ENCODE measurements at regions of chr12 and their contacts with region 1.

Region 1: GRCh38 chr12:12916135-12916944 is 25.0 kb downstream of the GPRC5A start:
- DNase-seq: peak; percentile 79 to 93 (median 91)
- ATAC-seq: peak; percentile 89
- H3K4me3 ChIP-seq: no peak overlapping the region
- H3K4me1 ChIP-seq: no peaks in the 10 kb centered on the region
- CTCF ChIP-seq: peak; percentile 94

Region 2: DNA sequence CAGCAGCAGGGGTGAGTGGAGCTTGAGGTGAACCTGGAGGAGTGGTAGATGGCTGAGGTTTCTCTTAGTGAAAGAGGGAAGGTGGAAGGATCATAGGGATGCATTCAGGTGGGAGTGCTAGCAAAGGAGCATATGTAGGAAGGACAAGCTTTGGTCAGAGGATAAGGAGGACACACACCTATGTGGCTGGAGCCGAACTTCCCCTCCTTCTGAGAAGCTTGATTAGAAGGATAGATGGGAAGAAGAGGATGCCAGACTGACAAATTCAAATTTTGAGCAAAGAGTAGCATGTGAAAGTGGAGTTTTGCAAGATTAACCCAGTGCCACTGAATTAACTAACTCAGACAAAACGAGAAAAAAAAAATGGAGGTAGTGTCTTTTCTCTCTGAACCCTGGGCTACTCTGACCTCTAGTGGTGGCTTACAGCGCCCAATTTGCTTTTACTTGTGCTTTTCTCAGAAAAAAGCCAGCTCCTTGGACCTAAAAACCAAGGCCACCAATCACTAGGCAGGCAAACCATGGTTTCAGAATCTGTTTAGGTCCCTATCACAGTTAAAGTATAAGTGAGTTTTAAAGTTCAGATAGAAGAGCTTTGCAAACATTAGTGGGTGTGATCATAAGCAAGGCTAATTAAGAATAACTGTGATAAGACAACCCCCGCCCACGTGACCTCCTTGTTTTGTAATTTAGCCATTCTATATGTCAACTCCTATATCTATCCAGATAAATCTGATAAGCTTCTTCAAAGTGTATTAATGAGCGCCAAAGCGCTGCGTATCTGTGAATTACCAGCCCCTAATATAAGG is 295.7 kb after region 1 on chr12:
- intact Hi-C with region 1: loop called in 1 of 2 experiments (anchors 2 kb)
- DNase-seq: peak in 2 of 3 donors; percentile 41 to 84
- ATAC-seq: peak; percentile 51
- H3K4me3 ChIP-seq: no peak overlapping the region
- H3K4me1 ChIP-seq: peaks cover 8% of the 10 kb centered on the region
- CTCF ChIP-seq: peak; percentile 53

Region 3: DNA sequence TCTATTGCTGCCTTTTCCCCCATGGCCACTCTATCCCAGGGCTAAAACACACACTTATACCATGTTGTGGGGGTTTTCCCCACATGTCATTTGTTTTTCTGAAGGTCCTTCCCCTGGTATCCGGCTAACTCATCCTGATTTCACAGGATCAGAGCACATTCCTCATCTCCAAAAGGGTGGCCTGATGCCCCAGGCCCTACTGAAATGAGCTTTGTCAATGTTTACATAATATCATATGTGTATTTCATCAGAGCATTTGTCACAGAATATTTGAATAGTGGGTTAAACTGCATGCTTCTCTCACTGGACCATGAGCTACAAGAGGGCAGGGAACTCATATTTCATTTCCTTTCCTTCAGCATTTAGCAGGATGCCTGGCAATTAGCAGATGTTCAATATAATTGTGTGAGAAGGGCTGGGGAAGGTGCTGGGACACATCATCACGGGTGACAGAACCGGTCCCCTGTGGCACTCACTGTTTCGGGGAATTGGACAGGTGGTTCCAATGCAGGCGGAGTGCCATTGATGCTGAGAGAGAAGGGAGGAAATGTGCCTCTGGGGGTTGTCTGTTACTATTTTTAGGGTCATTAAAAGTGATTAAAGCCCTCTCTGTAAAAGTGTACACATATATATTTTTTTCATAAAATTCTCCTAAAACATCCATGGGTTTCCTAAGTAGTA is 307.0 kb after region 1 on chr12:
- intact Hi-C with region 1: loop called in 1 of 2 experiments (anchors 10 kb)
- DNase-seq: no peak
- ATAC-seq: no peak
- H3K4me3 ChIP-seq: no peak overlapping the region
- H3K4me1 ChIP-seq: peaks cover 6% of the 10 kb centered on the region
- CTCF ChIP-seq: no peak

Measured in mucosa of descending colon (tissue), 3 donors.